ENCODE measurements at regions of chr9 and their contacts with region 1.

Region 1: GRCh38 chr9:128045831-128046230 is 21.3 kb downstream of the NAIF1 start:
- DNase-seq: no peak
- H3K4me3 ChIP-seq: no peak overlapping the region
- H3K27ac ChIP-seq: no peak overlapping the region
- H3K27me3 ChIP-seq: peaks cover 3% of the 10 kb centered on the region
- CTCF ChIP-seq: no peak

Region 2: DNA sequence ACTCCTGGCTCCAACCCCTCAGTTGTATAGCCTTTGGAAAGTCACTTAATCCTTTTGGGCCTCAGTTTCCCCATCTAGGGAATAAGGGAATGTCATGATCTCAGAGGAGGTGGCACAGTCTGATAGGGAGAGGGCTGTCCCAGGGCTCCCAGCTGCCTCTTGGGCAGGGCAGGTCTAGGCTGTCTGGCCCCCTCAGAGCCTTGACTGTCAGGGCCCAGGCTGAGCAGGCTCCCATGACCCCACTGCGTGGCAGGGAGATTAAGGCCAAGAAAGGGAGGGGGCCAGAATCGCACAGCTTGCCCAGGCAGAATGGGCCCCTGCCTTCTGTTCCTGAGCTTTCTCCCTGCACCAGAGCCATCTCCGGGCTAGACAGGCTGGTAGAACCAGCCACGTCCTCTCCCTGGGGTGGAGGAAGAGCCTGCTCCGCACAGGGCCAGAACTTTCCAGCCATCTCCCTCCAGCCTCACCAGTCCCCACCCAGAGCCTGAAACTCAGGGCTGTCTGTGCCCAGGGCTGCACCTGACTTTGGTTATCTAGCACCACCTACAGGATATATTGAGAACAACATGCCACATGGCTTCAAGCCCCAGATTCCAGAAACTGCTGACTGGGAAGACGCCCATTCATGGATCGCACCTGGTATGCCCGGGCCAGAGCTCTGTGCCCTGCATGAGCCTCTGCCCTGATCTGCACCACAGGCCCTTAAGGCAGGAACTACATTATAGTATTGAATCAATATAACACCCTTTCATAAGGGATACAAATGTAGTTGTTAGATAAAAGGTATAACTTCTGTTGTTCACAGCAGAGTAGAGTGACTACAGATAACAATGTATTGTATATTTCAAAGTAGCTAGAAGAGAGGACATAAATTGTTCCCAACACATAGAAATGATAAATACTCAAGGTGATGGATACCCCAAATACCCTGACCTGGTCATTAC is 10.7 kb before region 1 on chr9:
- CTCF ChIA-PET with region 1: interaction called, 15 read pairs
- POLR2A ChIA-PET with region 1: no interaction called
- DNase-seq: peak; percentile 23
- H3K4me3 ChIP-seq: no peak overlapping the region
- H3K27ac ChIP-seq: no peak overlapping the region
- H3K27me3 ChIP-seq: peaks cover 2% of the 10 kb centered on the region
- CTCF ChIP-seq: peak; percentile 66

Measured in AG04450 (cell line).